Left cardiac atrium (tissue), 4 donors: ENCODE measurements at regions of chr1 and their contacts with region 1.

Region 1: DNA sequence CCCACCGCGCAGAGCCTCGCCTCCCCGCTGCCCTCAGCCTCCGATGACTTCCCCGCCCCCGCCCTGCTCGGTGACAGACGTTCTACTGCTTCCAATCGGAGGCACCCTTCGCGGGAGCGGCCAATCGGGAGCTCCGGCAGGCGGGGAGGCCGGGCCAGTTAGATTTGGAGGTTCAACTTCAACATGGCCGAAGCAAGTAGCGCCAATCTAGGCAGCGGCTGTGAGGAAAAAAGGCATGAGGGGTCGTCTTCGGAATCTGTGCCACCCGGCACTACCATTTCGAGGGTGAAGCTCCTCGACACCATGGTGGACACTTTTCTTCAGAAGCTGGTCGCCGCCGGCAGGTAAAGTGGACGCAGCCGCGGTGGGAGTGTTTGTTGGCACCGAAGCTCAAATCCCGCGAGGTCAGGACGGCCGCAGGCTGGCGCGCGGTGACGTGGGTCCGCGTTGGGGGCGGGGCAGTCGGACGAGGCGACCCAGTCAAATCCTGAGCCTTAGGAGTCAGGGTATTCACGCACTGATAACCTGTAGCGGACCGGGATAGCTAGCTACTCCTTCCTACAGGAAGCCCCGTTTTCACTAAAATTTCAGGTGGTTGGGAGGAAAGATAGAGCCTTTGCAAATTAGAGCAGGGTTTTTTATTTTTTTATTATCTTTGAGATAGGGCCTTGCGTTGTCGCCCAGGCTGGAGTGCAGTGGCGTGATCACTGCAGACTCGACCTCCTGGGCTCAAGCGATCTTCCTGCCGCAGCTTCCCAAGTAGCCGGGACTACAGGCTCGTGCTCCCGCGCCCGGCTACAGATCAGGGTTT is at the start of gene PMF1:
- DNase-seq: peak; percentile 99
- ATAC-seq: peak; percentile 98 to 99
- total RNA-seq, gene PMF1: 47.4 to 62.8 TPM

Region 2: GRCh38 chr1:156160743-156161171 is 52.3 kb before region 1 on chr1:
- intact Hi-C with region 1: loop called in 1 of 2 experiments (anchors 5 kb)
- DNase-seq: peak; percentile 93
- ATAC-seq: peak; percentile 87 to 91